A673 (cell line): ENCODE measurements at regions of chr12 and their contacts with region 1.

Region 1: DNA sequence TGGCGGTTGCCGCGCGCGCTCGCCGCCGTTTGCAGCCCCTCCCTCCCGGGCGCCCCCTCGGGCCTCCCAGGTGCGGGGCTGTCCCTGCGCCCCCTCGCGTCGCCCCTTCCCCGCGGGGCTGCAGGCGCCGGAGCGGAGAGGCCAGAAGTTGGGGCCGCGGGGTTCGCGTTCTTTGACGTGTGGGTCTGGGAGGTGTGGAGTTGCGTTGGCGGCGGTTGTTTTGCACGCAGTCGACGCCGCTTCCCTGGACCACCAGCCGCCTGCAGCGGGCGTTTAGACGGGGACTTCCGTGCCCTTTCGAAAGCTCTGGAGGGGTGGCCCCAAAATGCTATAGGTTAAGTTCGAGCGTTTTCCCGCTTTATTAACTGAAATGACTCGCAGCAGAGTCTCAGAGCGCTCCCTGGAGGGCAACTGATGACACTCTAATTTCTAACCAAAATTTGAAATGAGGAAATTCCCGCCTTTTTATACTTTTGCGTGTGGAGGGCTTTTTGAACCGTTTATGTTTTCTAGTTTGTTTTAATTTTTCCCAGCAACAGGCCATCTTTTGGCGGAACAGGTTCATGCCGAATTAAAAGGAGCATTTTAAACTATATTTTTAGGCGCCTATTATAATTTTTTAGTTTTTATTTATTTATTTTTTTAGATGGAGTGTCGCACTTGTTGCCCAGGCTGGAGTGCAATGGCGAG is 939 bp downstream of the TMPO start:
- DNase-seq: peak; percentile 97
- H3K4me3 ChIP-seq: peak overlapping the region; percentile 98
- H3K27ac ChIP-seq: peak overlapping the region; percentile 100
- H3K4me1 ChIP-seq: peaks cover 31% of the 10 kb centered on the region
- H3K27me3 ChIP-seq: no peaks in the 10 kb centered on the region
- CTCF ChIP-seq: peak; percentile 73

Region 2: DNA sequence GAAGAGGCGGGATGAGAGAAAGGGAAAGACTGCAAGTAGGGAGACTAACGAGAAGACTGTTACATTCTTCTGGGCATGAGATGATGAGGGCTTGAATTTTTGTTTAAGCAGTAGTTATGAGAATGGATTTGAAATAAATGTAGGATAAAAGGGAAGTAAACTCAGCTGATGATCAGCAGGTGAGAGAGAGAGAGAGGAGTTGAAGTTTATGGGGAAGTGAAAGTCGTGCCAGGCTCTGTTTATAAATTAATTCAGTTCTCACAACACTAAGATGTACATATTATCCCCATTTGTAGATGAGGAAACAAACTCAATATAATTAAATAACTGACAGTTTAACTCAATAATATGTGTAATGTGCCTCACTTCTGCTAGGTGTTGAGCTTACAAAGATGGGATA is 1223.7 kb before region 1 on chr12:
- CTCF ChIA-PET with region 1: no interaction called
- POLR2A ChIA-PET with region 1: no interaction called
- intact Hi-C with region 1: no loop called
- DNase-seq: no peak
- H3K4me3 ChIP-seq: no peak overlapping the region
- H3K27ac ChIP-seq: no peak overlapping the region
- H3K4me1 ChIP-seq: no peaks in the 10 kb centered on the region
- H3K27me3 ChIP-seq: peaks cover 9% of the 10 kb centered on the region
- CTCF ChIP-seq: no peak

Region 3: GRCh38 chr12:98388126-98388525 is 128.2 kb before region 1 on chr12:
- CTCF ChIA-PET with region 1: no interaction called
- POLR2A ChIA-PET with region 1: no interaction called
- intact Hi-C with region 1: no loop called
- DNase-seq: no peak
- H3K4me3 ChIP-seq: no peak overlapping the region
- H3K27ac ChIP-seq: no peak overlapping the region
- H3K4me1 ChIP-seq: peaks cover 7% of the 10 kb centered on the region
- H3K27me3 ChIP-seq: no peaks in the 10 kb centered on the region
- CTCF ChIP-seq: no peak

Region 4: DNA sequence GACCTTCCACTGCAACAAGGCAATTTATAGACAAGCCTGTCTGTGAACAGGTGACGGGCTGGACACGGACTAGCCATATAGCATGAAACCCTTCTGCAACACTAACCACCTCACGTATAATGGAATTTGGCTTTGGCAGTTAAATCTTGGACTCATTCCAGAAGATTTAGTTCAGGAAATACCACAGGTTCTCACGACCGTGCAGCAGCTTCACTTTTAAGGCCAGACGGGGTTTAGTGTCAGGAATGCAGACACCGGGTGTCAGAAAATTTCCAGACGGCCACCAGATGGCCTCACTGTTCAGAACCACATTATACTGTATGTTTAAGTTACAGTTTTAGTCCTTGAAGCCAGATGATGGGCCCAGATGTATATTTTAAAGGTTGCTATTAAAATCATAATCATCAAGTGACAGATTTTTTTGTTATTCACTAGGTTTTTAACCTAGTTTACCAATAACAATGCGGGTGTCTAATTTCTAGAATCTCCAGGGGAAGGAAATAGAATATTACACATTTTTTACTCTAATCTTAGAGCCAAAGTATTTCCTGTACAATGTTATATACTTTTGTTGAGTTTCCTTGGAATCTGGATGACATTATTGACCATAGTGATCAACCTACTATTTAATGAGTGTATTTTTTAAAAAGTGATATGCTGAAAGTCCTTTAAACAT is 91.5 kb before region 1 on chr12:
- CTCF ChIA-PET with region 1: no interaction called
- POLR2A ChIA-PET with region 1: no interaction called
- intact Hi-C with region 1: loop called (anchors 1 kb)
- DNase-seq: peak; percentile 90
- H3K4me3 ChIP-seq: no peak overlapping the region
- H3K27ac ChIP-seq: peak overlapping the region; percentile 76
- H3K4me1 ChIP-seq: peaks cover 36% of the 10 kb centered on the region
- H3K27me3 ChIP-seq: no peaks in the 10 kb centered on the region
- CTCF ChIP-seq: peak; percentile 85

Region 5: GRCh38 chr12:98439981-98440581 is 76.2 kb before region 1 on chr12:
- CTCF ChIA-PET with region 1: no interaction called
- POLR2A ChIA-PET with region 1: no interaction called
- intact Hi-C with region 1: loop called (anchors 2 kb)
- DNase-seq: peak; percentile 98
- H3K4me3 ChIP-seq: no peak overlapping the region
- H3K27ac ChIP-seq: peak overlapping the region; percentile 88
- H3K4me1 ChIP-seq: peaks cover 16% of the 10 kb centered on the region
- H3K27me3 ChIP-seq: no peaks in the 10 kb centered on the region
- CTCF ChIP-seq: no peak; the same call in 1 of the 2 replicates

Region 6: GRCh38 chr12:98490501-98491453 is 25.6 kb before region 1 on chr12:
- CTCF ChIA-PET with region 1: no interaction called
- POLR2A ChIA-PET with region 1: no interaction called
- intact Hi-C with region 1: loop called (anchors 1 kb)
- DNase-seq: peak; percentile 93
- H3K4me3 ChIP-seq: no peak overlapping the region
- H3K27ac ChIP-seq: peak overlapping the region; percentile 66
- H3K4me1 ChIP-seq: peaks cover 6% of the 10 kb centered on the region
- H3K27me3 ChIP-seq: no peaks in the 10 kb centered on the region
- CTCF ChIP-seq: peak; percentile 95

Region 7: DNA sequence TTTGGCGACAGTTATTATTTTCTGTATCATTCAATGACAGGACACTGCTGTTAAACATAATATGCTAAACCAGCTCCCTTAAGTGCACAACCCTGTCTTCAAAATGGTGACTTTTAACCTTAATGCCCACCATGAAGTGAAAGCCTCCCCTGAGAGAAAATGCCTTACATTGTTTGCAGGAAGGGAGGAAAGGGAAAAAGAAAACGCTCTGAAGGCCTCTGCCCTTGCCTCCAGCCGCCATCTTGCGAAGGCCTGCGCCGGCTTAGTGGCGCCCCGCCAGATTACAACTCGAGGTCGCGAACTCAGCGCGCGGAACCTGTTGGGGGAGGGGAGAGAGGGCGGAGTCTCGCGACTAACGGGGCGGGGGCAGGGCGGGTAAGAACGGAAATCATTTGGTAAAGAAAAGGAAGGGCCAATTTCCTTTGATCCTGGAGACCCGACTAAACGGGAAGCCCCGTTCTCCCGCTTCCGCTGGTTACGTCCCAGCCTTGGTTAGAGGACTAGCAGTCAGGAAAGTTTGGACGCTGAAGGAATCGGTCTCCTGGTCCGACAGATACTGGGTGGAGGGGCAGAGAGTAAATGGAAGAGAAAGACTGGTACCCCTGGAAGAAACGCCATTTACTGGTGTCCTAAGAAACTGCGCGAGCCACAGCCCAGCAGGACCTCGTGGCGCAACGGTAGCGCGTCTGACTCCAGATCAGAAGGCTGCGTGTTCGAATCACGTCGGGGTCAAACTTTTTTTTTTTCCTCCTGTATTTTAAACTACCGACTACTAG is 12.5 kb before region 1 on chr12:
- CTCF ChIA-PET with region 1: no interaction called
- POLR2A ChIA-PET with region 1: no interaction called
- intact Hi-C with region 1: loop called (anchors 1 kb)
- DNase-seq: peak; percentile 95
- H3K4me3 ChIP-seq: peak overlapping the region; percentile 65
- H3K27ac ChIP-seq: peak overlapping the region; percentile 95
- H3K4me1 ChIP-seq: no peaks in the 10 kb centered on the region
- H3K27me3 ChIP-seq: no peaks in the 10 kb centered on the region
- CTCF ChIP-seq: no peak

Region 8: GRCh38 chr12:98983647-98984046 is 467.3 kb after region 1 on chr12:
- CTCF ChIA-PET with region 1: no interaction called
- POLR2A ChIA-PET with region 1: no interaction called
- intact Hi-C with region 1: no loop called
- DNase-seq: no peak
- H3K4me3 ChIP-seq: no peak overlapping the region
- H3K27ac ChIP-seq: no peak overlapping the region
- H3K4me1 ChIP-seq: no peaks in the 10 kb centered on the region
- H3K27me3 ChIP-seq: no peaks in the 10 kb centered on the region
- CTCF ChIP-seq: no peak

Region 9: GRCh38 chr12:99352269-99352668 is 835.9 kb after region 1 on chr12:
- CTCF ChIA-PET with region 1: no interaction called
- POLR2A ChIA-PET with region 1: no interaction called
- intact Hi-C with region 1: no loop called
- DNase-seq: no peak
- H3K4me3 ChIP-seq: no peak overlapping the region
- H3K27ac ChIP-seq: peak overlapping the region; percentile 13
- H3K4me1 ChIP-seq: peaks cover 5% of the 10 kb centered on the region
- H3K27me3 ChIP-seq: no peaks in the 10 kb centered on the region
- CTCF ChIP-seq: no peak